ENCODE measurements at regions of chr4 and their contacts with region 1.

Region 1: DNA sequence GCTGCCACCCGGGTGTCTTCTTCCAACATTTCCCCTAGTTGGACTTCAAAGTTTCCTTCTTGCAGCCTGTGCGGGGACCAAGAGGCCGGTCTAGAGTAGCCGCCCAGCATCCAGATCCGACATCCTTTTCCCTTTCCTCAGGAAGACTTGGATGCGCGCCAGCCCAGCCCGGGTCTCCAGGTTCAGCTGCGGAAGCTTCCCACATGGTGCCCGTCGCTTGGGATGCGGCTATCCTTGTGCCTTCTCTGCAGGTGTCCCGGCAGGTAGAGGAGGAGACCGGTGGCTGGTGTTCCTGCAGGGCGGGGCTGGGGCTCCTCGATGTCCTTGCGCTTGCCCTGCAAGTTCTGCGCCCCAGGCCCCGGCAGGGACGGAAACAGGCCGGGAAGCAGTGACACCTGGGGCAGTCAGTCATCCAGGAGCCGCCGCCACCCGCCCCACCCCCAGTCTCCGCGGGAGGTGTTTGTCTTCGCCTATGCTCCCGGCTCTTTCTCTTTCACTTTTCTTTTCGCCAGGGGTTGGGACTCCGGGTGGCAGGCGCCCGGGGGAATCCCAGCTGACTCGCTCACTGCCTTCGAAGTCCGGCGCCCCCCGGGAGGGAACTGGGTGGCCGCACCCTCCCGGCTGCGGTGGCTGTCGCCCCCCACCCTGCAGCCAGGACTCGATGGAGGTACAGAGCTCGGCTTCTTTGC is at the start of gene IL15:
- DNase-seq: peak; percentile 86
- ATAC-seq: peak; percentile 75
- H3K4me3 ChIP-seq: peak within 1 kb of the TSS; percentile 92
- H3K27ac ChIP-seq: peak within 1 kb of the TSS; percentile 84
- H3K4me1 ChIP-seq: peaks cover 15% of the 10 kb centered on the region
- H3K27me3 ChIP-seq: no peaks in the 10 kb centered on the region
- CTCF ChIP-seq: no peak
- total RNA-seq, gene IL15: 7.1 and 9.3 TPM in 2 replicates

Region 2: GRCh38 chr4:141375855-141376254 is 260.4 kb before region 1 on chr4:
- CTCF ChIA-PET with region 1: no interaction called
- POLR2A ChIA-PET with region 1: no interaction called
- intact Hi-C with region 1: loop called (anchors 5 kb)
- DNase-seq: peak; percentile 95
- ATAC-seq: peak; percentile 100
- H3K4me3 ChIP-seq: no peak overlapping the region
- H3K27ac ChIP-seq: no peak overlapping the region
- H3K4me1 ChIP-seq: peaks cover 6% of the 10 kb centered on the region
- H3K27me3 ChIP-seq: no peaks in the 10 kb centered on the region
- CTCF ChIP-seq: peak; percentile 93

Region 3: DNA sequence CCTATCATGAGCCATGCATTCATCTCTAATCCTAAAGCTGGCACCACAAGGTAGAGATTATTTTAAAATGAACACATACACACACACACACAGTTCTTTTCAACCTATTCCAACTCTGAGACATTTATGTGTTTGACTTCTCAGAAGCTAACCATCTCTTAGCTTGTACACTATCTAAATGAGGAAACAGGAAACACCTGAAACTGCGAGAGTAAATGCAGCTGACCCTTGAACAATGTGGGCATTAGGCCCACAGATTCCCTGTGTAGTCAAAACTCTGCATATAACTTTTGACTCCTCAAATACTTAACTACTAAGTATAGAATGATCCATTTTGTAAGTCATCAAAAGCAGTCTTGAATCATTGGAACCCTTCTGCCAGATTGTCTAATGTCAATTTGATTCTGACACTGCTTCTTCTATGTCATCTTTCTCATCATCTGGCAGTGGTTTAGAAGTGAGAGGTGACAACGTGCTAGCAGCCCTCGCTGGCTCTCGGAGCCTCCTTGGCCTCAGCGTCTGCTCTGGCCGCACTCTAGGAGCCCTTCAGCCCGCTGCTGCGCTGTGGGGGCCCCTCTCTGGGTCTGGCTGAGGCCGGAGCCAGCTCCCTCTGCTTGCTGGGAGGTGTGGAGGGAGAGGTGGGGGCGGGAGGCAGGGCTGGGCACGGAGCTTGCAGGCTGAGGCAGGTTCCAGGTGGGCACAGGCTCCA is 21.2 kb before region 1 on chr4:
- CTCF ChIA-PET with region 1: no interaction called
- POLR2A ChIA-PET with region 1: no interaction called
- intact Hi-C with region 1: no loop called
- DNase-seq: no peak
- ATAC-seq: no peak
- H3K4me3 ChIP-seq: no peak overlapping the region
- H3K27ac ChIP-seq: no peak overlapping the region
- H3K4me1 ChIP-seq: no peaks in the 10 kb centered on the region
- H3K27me3 ChIP-seq: no peaks in the 10 kb centered on the region
- CTCF ChIP-seq: no peak

Region 4: DNA sequence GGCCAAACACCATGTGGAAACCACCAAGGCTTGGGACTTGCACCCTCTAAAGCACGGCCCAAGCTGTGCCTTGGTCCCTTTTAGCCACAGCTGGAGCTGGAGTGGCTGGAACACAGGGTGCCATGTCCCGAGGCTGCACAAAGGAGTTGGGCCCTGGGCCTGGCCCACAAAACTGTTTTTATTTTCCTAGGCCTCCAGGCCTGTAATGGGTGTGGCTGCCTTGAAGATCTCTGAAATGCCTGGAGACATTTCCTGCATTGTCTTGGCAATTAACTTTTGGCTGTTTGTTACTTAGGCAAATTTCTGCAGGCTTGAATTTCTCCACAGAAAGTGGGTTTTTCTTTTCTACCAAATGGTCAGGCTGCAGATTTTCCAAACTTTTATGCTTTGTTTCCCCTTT is 55.9 kb after region 1 on chr4:
- CTCF ChIA-PET with region 1: no interaction called
- POLR2A ChIA-PET with region 1: no interaction called
- intact Hi-C with region 1: no loop called
- DNase-seq: no peak
- ATAC-seq: no peak
- H3K4me3 ChIP-seq: no peak overlapping the region
- H3K27ac ChIP-seq: no peak overlapping the region
- H3K4me1 ChIP-seq: peaks cover 9% of the 10 kb centered on the region
- H3K27me3 ChIP-seq: no peaks in the 10 kb centered on the region
- CTCF ChIP-seq: no peak

Region 5: GRCh38 chr4:141711014-141711610 is 74.9 kb after region 1 on chr4:
- CTCF ChIA-PET with region 1: no interaction called
- POLR2A ChIA-PET with region 1: no interaction called
- intact Hi-C with region 1: loop called (anchors 5 kb)
- DNase-seq: peak; percentile 61
- ATAC-seq: peak; percentile 50
- H3K4me3 ChIP-seq: no peak overlapping the region
- H3K27ac ChIP-seq: no peak overlapping the region
- H3K4me1 ChIP-seq: peaks cover 24% of the 10 kb centered on the region
- H3K27me3 ChIP-seq: no peaks in the 10 kb centered on the region
- CTCF ChIP-seq: peak; percentile 76

Region 6: GRCh38 chr4:141853091-141853764 is 217.0 kb after region 1 on chr4:
- CTCF ChIA-PET with region 1: no interaction called
- POLR2A ChIA-PET with region 1: no interaction called
- intact Hi-C with region 1: no loop called
- DNase-seq: peak; percentile 98
- ATAC-seq: peak; percentile 96
- H3K4me3 ChIP-seq: peak overlapping the region; percentile 22; the same call in 1 of the 2 replicates
- H3K27ac ChIP-seq: peak overlapping the region; percentile 91
- H3K4me1 ChIP-seq: peaks cover 39% of the 10 kb centered on the region
- H3K27me3 ChIP-seq: no peaks in the 10 kb centered on the region
- CTCF ChIP-seq: no peak